ENCODE measurements at regions of chr4 and their contacts with region 1.

Region 1: DNA sequence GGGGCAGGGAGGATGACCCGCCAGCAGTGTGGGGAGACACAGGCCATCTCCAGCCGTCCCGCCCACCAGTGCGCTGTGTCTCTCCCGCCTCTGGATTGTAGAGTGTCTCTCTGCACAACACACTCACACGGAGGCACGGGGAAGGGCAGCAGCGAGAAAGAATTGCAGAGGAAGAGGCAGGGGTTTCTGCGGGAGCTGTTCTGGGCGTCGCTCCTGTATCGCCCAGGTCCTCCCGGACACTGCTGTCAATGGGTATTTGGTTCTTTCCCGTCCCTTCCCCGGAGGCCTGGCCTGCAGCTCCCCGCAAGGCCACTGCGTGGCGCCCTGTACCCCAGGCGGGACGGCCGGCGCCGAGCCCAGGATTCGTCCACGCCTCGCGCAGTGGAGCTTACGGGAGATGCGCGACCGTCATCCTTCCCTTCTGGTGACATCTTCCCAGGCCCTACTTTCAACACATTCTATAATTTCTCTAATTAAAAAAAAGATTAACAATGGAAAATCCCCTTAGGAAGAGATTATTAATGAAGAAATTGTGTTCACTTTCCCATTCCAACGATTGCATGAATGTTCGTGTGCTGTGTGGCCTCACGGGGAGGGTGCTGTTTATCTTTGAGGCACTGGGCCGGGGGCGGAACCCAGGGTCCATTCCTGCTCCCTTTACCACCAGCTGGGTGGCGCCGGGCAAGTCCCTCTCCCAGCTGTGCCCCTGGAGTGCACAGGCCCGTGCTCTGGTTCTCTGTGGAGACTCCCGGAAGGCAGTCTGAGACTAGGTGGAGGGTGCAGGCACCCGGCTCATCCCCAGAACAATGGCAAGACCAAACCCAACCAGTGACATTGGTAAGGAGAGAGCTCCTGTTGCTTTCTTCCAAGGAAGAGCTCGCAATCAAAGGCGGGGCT is 95.7 kb downstream of the CPZ start:
- DNase-seq: no peak
- ATAC-seq: peak; percentile 89
- H3K4me3 ChIP-seq: no peak overlapping the region
- H3K27ac ChIP-seq: no peak overlapping the region
- H3K4me1 ChIP-seq: no peaks in the 10 kb centered on the region
- H3K27me3 ChIP-seq: peaks cover 3% of the 10 kb centered on the region; the same call in 1 of the 2 replicates
- CTCF ChIP-seq: peak; percentile 90

Region 2: GRCh38 chr4:8886612-8887406 is 198.5 kb after region 1 on chr4:
- CTCF ChIA-PET with region 1: no interaction called
- POLR2A ChIA-PET with region 1: no interaction called
- in situ Hi-C with region 1: no loop called
- intact Hi-C with region 1: loop called (anchors 2 kb)
- DNase-seq: no peak
- ATAC-seq: no peak
- H3K4me3 ChIP-seq: no peak overlapping the region
- H3K27ac ChIP-seq: no peak overlapping the region
- H3K4me1 ChIP-seq: no peaks in the 10 kb centered on the region
- H3K27me3 ChIP-seq: no peaks in the 10 kb centered on the region
- CTCF ChIP-seq: peak; percentile 73

Region 3: GRCh38 chr4:8917868-8918783 is 229.8 kb after region 1 on chr4:
- CTCF ChIA-PET with region 1: no interaction called
- POLR2A ChIA-PET with region 1: no interaction called
- in situ Hi-C with region 1: no loop called
- intact Hi-C with region 1: loop called (anchors 5 kb)
- DNase-seq: peak; percentile 46
- ATAC-seq: peak; percentile 96
- H3K4me3 ChIP-seq: no peak overlapping the region
- H3K27ac ChIP-seq: no peak overlapping the region
- H3K4me1 ChIP-seq: no peaks in the 10 kb centered on the region
- H3K27me3 ChIP-seq: no peaks in the 10 kb centered on the region
- CTCF ChIP-seq: peak; percentile 88

Measured in Panc1 (cell line).